ENCODE measurements at regions of chr14 and their contacts with region 1.

Region 1: DNA sequence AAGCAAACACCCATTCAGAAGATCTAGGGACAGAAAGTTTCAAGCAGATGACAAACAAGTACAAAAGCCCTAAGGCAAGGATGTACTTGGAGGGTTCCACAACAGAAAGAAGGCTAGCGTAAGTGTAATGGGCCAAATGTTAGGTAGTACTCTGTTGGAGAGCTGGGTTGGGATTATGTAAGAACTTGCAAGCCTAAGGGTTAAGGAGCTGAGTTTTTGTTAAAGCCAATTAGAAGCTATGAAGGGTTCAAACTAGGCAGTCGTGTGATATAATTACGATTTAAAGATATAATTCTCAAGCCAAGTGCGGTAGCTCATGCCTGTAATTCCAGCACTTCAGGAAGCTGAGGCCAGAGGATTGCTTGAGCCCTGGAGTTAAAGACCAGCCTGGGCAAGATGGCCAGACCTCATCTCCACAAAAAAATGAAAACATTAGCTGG is 41.3 kb downstream of the HECTD1 start:
- DNase-seq: peak; percentile 27
- H3K4me3 Mint-ChIP-seq: peak overlapping the region; percentile 64
- H3K27ac Mint-ChIP-seq: peak overlapping the region; percentile 94
- H3K4me1 Mint-ChIP-seq: peaks cover 16% of the 10 kb centered on the region
- H3K27me3 Mint-ChIP-seq: no peaks in the 10 kb centered on the region
- CTCF ChIP-seq: no peak

Region 2: GRCh38 chr14:31360919-31361662 is 194.8 kb after region 1 on chr14:
- CTCF ChIA-PET with region 1: interaction called, 4 read pairs
- POLR2A ChIA-PET with region 1: interaction called, 3 read pairs
- intact Hi-C with region 1: loop called (anchors 5 kb)
- DNase-seq: no peak
- H3K4me3 Mint-ChIP-seq: no peak overlapping the region
- H3K27ac Mint-ChIP-seq: no peak overlapping the region
- H3K4me1 Mint-ChIP-seq: peaks cover 6% of the 10 kb centered on the region
- H3K27me3 Mint-ChIP-seq: no peaks in the 10 kb centered on the region
- CTCF ChIP-seq: no peak

Measured in MCF 10A (cell line).